B cell (primary cell): ENCODE measurements at regions of chr6 and their contacts with region 1.

Region 1: DNA sequence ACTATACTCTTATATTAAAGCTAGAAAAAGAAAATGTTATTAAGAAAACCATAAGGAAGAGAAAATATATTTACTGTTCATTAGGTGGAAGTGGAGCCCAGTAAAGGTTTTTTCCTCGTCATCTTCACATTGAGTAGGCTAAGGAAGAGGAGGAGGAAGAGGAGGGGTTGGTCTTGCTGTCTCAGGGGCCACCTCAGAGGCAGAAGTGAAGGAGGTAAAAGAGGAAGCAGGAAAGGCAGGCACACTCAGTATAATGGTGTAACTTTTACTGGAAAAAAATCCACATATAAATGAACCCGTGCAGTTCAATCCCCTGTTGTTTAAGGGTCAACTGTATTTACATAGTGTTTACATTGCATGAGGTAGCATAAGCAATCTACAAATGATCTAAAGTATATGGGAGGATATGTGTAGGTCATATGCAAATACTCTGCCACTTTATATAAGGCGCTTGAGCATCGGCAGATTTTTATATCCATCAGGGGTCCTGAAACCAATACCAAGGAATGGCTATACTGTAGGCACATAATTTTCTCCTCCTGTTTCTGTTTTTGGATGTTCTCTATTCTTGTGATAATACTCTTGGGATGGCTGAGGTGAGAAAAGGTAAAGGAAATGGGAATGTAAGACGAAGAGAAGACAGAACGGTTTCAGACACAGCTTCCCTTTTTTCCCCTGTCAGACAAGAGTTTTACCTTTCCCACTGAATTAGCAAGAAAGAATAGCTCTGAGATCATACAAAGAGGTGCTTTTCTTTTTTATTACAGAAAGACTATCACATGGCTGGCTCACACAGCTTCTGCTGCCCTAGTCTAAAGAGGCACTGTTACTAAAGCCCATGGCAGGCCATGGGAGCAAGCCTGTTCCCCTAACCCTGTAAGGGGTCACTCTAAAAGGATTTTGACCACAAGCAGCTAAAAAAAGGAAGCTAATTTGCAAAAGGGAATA is 59.9 kb downstream of the NUDT3 start:
- DNase-seq: peak; percentile 47
- ATAC-seq: peak; percentile 38
- H3K4me3 ChIP-seq: peak overlapping the region in 4 of 5 experiments; percentile 2 to 50 (median 21)
- H3K4me3 Mint-ChIP-seq: peak overlapping the region; percentile 63
- H3K27ac ChIP-seq: peak overlapping the region; percentile 36 to 65
- H3K27ac Mint-ChIP-seq: peak overlapping the region; percentile 68
- H3K4me1 ChIP-seq: peaks cover 28 to 33% of the 10 kb centered on the region in 2 donors
- H3K4me1 Mint-ChIP-seq: peaks cover 46% of the 10 kb centered on the region
- H3K27me3 ChIP-seq: no peaks in the 10 kb centered on the region
- H3K27me3 Mint-ChIP-seq: no peaks in the 10 kb centered on the region
- CTCF ChIP-seq: no peak

Region 2: GRCh38 chr6:34288581-34288980 is 43.9 kb before region 1 on chr6:
- CTCF ChIA-PET with region 1: no interaction called
- POLR2A ChIA-PET with region 1: no interaction called
- intact Hi-C with region 1: no loop called
- DNase-seq: no peak
- ATAC-seq: no peak
- H3K4me3 ChIP-seq: no peak overlapping the region
- H3K4me3 Mint-ChIP-seq: no peak overlapping the region
- H3K27ac ChIP-seq: peak overlapping the region in 1 of 2 donors; percentile 20
- H3K27ac Mint-ChIP-seq: peak overlapping the region; percentile 67
- H3K4me1 ChIP-seq: peaks cover 30 to 37% of the 10 kb centered on the region in 2 donors
- H3K4me1 Mint-ChIP-seq: peaks cover 58% of the 10 kb centered on the region
- H3K27me3 ChIP-seq: no peaks in the 10 kb centered on the region
- H3K27me3 Mint-ChIP-seq: no peaks in the 10 kb centered on the region
- CTCF ChIP-seq: no peak

Region 3: GRCh38 chr6:34315780-34316179 is 16.7 kb before region 1 on chr6:
- CTCF ChIA-PET with region 1: interaction called, 3 read pairs
- POLR2A ChIA-PET with region 1: no interaction called
- intact Hi-C with region 1: loop called (anchors 2 kb)
- DNase-seq: peak; percentile 82
- ATAC-seq: peak; percentile 86
- H3K4me3 ChIP-seq: peak overlapping the region in 4 of 5 experiments; percentile 6 to 45 (median 22)
- H3K4me3 Mint-ChIP-seq: peak overlapping the region; percentile 75
- H3K27ac ChIP-seq: peak overlapping the region; percentile 82 to 89
- H3K27ac Mint-ChIP-seq: peak overlapping the region; percentile 94
- H3K4me1 ChIP-seq: peaks cover 50 to 51% of the 10 kb centered on the region in 2 donors
- H3K4me1 Mint-ChIP-seq: peaks cover 65% of the 10 kb centered on the region
- H3K27me3 ChIP-seq: no peaks in the 10 kb centered on the region
- H3K27me3 Mint-ChIP-seq: no peaks in the 10 kb centered on the region
- CTCF ChIP-seq: no peak

Region 4: GRCh38 chr6:34378470-34378869 is 45.9 kb after region 1 on chr6:
- CTCF ChIA-PET with region 1: no interaction called
- POLR2A ChIA-PET with region 1: no interaction called
- intact Hi-C with region 1: loop called (anchors 5 kb)
- DNase-seq: no peak
- ATAC-seq: no peak
- H3K4me3 ChIP-seq: no peak overlapping the region
- H3K4me3 Mint-ChIP-seq: no peak overlapping the region
- H3K27ac ChIP-seq: no peak overlapping the region
- H3K27ac Mint-ChIP-seq: no peak overlapping the region
- H3K4me1 ChIP-seq: peaks cover 13 to 16% of the 10 kb centered on the region in 2 donors
- H3K4me1 Mint-ChIP-seq: peaks cover 24% of the 10 kb centered on the region
- H3K27me3 ChIP-seq: no peaks in the 10 kb centered on the region
- H3K27me3 Mint-ChIP-seq: no peaks in the 10 kb centered on the region
- CTCF ChIP-seq: no peak